ENCODE measurements at regions of chr3 and their contacts with region 1.

Region 1: GRCh38 chr3:159988617-159989271 is at the start of gene IL12A:
- DNase-seq: peak; percentile 77 to 80 (median 79)
- H3K4me3 ChIP-seq: peak within 1 kb of the TSS; percentile 64 to 66
- H3K4me3 Mint-ChIP-seq: peak within 1 kb of the TSS; percentile 81 to 86 (median 84)
- H3K27ac ChIP-seq: peak within 1 kb of the TSS; percentile 10
- H3K27ac Mint-ChIP-seq: peak within 1 kb of the TSS in 6 of 7 donors; percentile 20 to 88 (median 76)
- H3K4me1 ChIP-seq: peaks cover 12% of the 10 kb centered on the region
- H3K4me1 Mint-ChIP-seq: peaks cover 9 to 47% (median 17%) of the 10 kb centered on the region in 4 donors
- H3K27me3 ChIP-seq: no peaks in the 10 kb centered on the region
- H3K27me3 Mint-ChIP-seq: no peaks in the 10 kb centered on the region
- total RNA-seq, gene IL12A: 0.44 to 0.53 TPM

Region 2: DNA sequence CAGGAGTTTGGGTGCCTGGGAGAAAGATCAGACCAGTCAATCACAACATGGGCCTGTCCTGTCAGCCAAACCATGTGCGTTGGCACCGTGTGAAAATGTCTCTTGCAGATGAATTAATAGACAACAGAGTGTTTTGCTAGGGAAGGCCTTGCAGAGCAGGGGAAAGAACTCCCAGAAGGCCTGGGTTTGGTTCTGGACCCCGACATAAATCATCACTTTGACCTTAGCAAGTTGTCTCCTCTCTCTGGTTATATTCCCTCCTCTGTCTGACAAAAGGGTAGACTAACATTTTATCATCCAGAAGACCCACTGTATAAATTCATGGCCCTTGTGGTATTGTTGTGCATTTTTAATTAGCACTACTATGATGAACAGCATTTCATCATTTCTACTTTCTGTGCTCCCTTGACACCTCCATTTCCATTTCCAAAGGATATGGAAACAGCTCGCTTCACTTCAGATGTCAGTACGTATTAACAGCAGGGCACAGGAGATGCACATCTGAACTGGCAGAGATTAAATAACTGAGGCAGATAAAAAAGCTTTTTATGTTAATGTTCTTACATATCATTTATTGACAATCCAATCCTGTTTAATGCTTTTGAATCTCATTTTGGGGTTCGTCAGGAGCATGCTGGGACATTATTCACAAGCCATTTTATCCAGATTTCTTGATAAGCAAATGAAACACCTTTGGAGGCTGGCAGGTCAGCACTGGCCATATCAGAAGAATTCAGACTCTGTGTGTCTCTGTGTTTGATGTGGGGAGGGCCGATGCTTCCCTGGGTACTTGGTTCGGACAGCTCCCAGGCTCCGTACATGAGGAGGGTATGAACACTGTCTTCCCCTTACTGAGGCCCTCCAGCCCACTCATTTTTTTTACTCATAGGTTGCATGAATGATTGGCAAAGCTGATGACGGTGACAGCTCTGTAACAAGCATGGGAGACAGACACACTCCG is 28.3 kb before region 1 on chr3:
- CTCF ChIA-PET with region 1: interaction called, 12 read pairs
- POLR2A ChIA-PET with region 1: no interaction called
- intact Hi-C with region 1: no loop called
- DNase-seq: no peak
- H3K4me3 ChIP-seq: no peak overlapping the region
- H3K4me3 Mint-ChIP-seq: no peak overlapping the region
- H3K27ac ChIP-seq: no peak overlapping the region
- H3K27ac Mint-ChIP-seq: no peak overlapping the region
- H3K4me1 ChIP-seq: no peaks in the 10 kb centered on the region
- H3K4me1 Mint-ChIP-seq: no peaks in the 10 kb centered on the region
- H3K27me3 ChIP-seq: no peaks in the 10 kb centered on the region
- H3K27me3 Mint-ChIP-seq: peaks cover 2 to 4% of the 10 kb centered on the region in 2 donors

Region 3: GRCh38 chr3:159978353-159978752 is 10.4 kb before region 1 on chr3:
- CTCF ChIA-PET with region 1: interaction called, 16 read pairs
- POLR2A ChIA-PET with region 1: no interaction called
- intact Hi-C with region 1: no loop called
- DNase-seq: no peak
- H3K4me3 ChIP-seq: no peak overlapping the region
- H3K4me3 Mint-ChIP-seq: no peak overlapping the region
- H3K27ac ChIP-seq: no peak overlapping the region
- H3K27ac Mint-ChIP-seq: no peak overlapping the region
- H3K4me1 ChIP-seq: no peaks in the 10 kb centered on the region
- H3K4me1 Mint-ChIP-seq: no peaks in the 10 kb centered on the region
- H3K27me3 ChIP-seq: peaks cover 6% of the 10 kb centered on the region
- H3K27me3 Mint-ChIP-seq: peaks cover 24 to 36% of the 10 kb centered on the region in 2 donors

Region 4: DNA sequence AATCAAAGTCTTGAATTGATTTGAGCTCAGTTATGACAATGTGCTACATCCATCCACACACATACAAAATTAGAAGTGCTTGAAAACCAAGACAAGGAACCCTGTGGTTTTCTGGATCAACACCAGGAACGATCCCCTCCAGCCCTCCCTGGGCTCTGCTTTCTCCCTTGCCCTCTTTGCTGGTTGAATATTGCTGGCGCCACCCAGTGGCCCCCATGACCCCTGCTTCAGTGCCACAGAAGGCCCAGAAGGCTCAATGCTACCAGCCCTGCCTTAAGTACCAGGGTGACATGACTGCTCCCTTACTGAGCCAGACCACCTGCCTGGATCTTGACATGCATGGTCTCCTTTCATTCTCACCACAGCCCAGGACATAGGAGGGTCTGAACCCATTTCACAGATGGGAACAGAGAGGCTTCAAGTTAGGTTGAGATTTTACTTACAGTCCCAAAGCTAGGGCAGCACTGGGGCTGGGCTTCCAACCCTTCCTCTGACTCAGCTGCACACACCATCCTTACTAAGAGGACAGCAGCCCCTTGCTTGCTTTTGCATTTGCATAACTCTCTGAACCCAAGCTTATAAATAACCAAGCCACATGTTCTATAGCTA is 14.9 kb after region 1 on chr3:
- CTCF ChIA-PET with region 1: interaction called, 128 read pairs
- POLR2A ChIA-PET with region 1: no interaction called
- intact Hi-C with region 1: no loop called
- DNase-seq: peak in 2 of 5 donors; percentile 9
- H3K4me3 ChIP-seq: no peak overlapping the region
- H3K4me3 Mint-ChIP-seq: no peak overlapping the region
- H3K27ac ChIP-seq: no peak overlapping the region
- H3K27ac Mint-ChIP-seq: no peak overlapping the region
- H3K4me1 ChIP-seq: no peaks in the 10 kb centered on the region
- H3K4me1 Mint-ChIP-seq: peaks cover 0 to 1% (median 0%) of the 10 kb centered on the region in 4 donors
- H3K27me3 ChIP-seq: no peaks in the 10 kb centered on the region
- H3K27me3 Mint-ChIP-seq: no peaks in the 10 kb centered on the region

Region 5: DNA sequence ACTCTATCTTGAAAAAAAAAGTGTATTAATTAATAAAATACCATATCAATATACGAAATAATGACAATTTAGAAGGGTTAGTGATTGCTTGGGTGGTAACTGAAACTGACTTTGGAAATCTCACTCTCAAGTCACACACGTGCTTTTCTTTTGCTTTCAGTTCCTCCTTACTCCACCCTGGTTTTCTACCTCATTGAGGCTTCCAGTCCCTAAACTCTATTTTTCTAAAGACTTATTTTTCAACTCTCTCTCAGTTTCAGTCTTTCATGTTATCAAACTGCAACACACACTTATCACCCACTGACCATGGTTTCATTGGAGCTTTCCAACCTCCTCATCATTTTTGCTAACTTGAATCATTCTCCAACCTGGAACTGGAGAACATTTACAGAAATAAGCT is 23.4 kb after region 1 on chr3:
- CTCF ChIA-PET with region 1: interaction called, 128 read pairs
- POLR2A ChIA-PET with region 1: no interaction called
- intact Hi-C with region 1: no loop called
- DNase-seq: no peak
- H3K4me3 ChIP-seq: no peak overlapping the region
- H3K4me3 Mint-ChIP-seq: peak overlapping the region in 1 of 8 donors; percentile 21
- H3K27ac ChIP-seq: no peak overlapping the region
- H3K27ac Mint-ChIP-seq: peak overlapping the region in 1 of 7 donors; percentile 9
- H3K4me1 ChIP-seq: no peaks in the 10 kb centered on the region
- H3K4me1 Mint-ChIP-seq: peaks cover 0 to 4% (median 2%) of the 10 kb centered on the region in 4 donors
- H3K27me3 ChIP-seq: no peaks in the 10 kb centered on the region
- H3K27me3 Mint-ChIP-seq: no peaks in the 10 kb centered on the region

Region 6: DNA sequence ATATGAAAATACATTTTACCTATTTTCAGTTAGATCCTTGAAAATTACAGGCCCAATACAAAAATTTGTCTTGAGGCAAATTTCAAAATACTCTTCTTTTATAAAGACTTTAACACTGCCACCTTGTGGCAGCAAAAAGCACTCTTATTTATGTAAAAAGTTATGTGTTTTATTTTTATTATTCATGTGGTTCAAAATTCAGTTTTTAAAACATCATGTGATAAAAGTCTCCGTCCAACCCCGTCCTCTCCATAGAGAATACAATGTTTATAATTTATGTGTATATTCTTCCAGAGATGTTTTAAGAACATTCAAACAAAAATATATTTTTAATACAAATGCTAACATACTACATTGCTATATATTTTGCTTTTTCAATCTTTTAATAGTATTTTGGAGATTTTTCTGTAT is 497.7 kb after region 1 on chr3:
- CTCF ChIA-PET with region 1: interaction called, 5 read pairs
- POLR2A ChIA-PET with region 1: no interaction called
- intact Hi-C with region 1: loop called (anchors 1 kb)
- DNase-seq: peak in 4 of 5 donors; percentile 8 to 27 (median 20)
- H3K4me3 ChIP-seq: no peak overlapping the region
- H3K4me3 Mint-ChIP-seq: no peak overlapping the region
- H3K27ac ChIP-seq: no peak overlapping the region
- H3K27ac Mint-ChIP-seq: no peak overlapping the region
- H3K4me1 ChIP-seq: no peaks in the 10 kb centered on the region
- H3K4me1 Mint-ChIP-seq: peaks cover 0 to 7% (median 5%) of the 10 kb centered on the region in 4 donors
- H3K27me3 ChIP-seq: no peaks in the 10 kb centered on the region
- H3K27me3 Mint-ChIP-seq: peaks cover 2% of the 10 kb centered on the region in 2 donors